Ovary (tissue), 10 donors: ENCODE measurements at regions of chr11 and their contacts with region 1.

Region 1: DNA sequence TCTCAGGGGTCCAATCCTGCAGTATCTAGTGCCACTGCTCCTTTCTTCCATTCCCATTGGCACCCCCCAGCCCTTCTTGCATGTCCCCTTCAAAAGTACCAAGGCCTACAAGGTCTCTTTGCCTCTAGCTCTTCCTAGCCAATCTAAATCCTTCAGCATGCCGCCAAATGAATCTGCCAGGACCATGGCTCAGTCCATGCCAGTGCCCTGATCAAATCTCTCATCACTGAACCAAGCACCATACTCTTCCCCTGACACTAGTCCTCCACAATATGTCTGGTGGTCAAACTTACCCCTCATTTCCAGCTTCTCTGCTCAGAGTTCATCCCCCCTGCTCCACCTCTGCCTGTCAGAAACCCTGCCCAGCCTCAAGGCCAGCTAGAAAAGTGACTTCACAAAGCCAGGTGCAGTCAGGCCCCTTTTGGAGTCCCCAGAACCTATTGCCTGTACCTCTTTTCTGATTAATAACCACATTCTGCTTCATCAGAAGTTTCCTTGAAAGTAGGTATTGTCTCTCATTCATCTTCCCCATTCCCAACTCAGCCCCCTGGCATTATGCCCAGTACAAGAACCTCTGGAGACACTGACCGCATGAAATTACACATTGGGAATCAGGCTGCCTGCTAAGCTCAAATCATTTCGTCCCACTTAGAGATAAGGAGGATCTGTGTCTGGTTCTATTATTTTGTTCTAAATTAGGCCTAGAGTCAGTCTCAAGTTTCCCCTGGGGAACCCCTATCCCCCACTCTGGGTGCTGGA is 11.4 kb downstream of the FEN1 start:
- DNase-seq: no peak
- H3K4me3 ChIP-seq: no peak overlapping the region
- H3K27ac ChIP-seq: no peak overlapping the region
- H3K4me1 ChIP-seq: no peaks in the 10 kb centered on the region
- H3K27me3 ChIP-seq: no peaks in the 10 kb centered on the region
- CTCF ChIP-seq: no peak
- EP300 ChIP-seq: no peak
- POLR2A ChIP-seq: no peak

Region 2: GRCh38 chr11:61860054-61860903 is 56.2 kb after region 1 on chr11:
- intact Hi-C with region 1: loop called in 1 of 4 experiments (anchors 5 kb)
- DNase-seq: peak; percentile 60 to 85 (median 72)
- H3K4me3 ChIP-seq: no peak overlapping the region
- H3K27ac ChIP-seq: no peak overlapping the region
- H3K4me1 ChIP-seq: no peaks in the 10 kb centered on the region
- H3K27me3 ChIP-seq: no peaks in the 10 kb centered on the region
- CTCF ChIP-seq: no peak
- EP300 ChIP-seq: no peak
- POLR2A ChIP-seq: no peak